Natural killer cell (primary cell): ENCODE measurements at regions of chr21 and their contacts with region 1.

Region 1: DNA sequence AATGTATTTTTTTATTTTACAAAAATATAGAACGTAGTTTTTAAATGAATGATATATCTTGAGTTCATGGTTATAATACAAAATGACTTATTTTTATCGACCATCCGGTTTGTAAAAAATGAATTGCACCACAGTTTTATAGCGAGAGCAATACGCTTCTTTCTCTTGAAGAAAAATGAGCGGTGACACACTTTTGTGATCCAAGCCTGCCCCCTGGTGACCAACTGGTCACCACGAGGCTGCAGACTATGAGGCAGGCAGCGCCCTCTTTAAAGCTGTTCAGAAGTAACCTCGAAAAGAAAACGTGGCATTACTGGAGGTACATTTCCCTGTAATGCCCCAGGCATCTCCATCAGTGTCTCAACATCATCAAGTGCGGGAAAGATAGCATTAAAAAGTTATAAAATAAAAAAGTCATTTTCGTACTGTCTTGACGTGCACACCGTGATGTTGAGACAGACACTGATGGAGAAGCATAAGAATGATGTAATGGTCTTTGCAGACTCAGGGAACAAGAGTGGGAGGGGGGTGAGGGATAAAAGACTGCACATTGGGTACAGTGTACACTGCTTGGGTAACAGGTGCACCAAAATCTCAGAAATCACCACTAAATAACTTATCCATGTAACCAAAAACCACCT is 734.2 kb upstream of the ADAMTS5 start:
- DNase-seq: peak; percentile 64 to 66
- ATAC-seq: peak; percentile 72 to 91 (median 85)
- H3K4me3 ChIP-seq: no peak overlapping the region
- H3K4me3 Mint-ChIP-seq: no peak overlapping the region
- H3K27ac ChIP-seq: no peak overlapping the region
- H3K27ac Mint-ChIP-seq: no peak overlapping the region
- H3K4me1 ChIP-seq: no peaks in the 10 kb centered on the region
- H3K4me1 Mint-ChIP-seq: no peaks in the 10 kb centered on the region
- H3K27me3 ChIP-seq: no peaks in the 10 kb centered on the region
- H3K27me3 Mint-ChIP-seq: peaks cover 0 to 16% of the 10 kb centered on the region in 2 donors
- CTCF ChIP-seq: peak; percentile 80

Region 2: DNA sequence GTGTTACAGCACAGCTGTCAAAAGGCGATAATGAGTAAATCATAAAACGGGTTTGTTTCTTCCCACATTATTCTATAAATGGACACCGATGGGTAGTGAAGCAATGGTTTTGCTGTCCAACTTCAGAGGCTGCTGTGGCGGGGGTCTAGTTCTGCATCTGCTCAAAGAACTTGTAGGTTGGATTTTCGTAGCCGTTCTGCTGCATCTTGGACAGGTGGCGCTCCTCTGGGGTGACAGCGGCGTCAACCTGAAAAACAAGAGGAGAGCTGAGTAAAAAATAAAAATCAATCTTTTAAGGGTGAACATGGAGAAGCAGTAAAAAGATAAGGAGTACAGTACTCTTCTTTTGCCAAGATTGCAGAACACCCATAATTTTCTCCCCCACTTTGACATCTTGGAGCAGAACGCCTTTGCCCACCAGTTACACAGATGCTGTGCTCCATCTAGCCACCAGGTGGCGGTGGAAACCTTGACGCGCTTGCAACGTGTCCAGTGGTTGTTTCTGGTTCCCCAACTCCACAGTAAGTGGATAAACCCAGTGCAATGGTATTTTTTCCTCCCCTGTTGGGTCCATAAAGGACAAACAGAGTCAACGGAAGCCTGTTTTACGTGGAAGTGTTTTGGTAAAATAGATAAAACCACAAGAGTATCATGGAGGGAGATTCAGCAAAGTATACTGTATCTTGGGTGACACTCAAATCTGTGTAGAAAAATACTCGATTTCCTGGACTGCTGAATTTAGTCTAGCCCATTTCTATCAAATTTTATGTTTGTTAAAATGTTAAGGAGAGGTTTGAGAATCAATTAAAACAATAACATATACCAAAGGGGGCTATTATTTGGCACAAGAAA is 1819.3 kb before region 1 on chr21:
- intact Hi-C with region 1: loop called (anchors 2 kb)
- DNase-seq: peak; percentile 30 to 73
- ATAC-seq: peak; percentile 64 to 81 (median 79)
- H3K4me3 ChIP-seq: no peak overlapping the region
- H3K4me3 Mint-ChIP-seq: no peak overlapping the region
- H3K27ac ChIP-seq: no peak overlapping the region
- H3K27ac Mint-ChIP-seq: no peak overlapping the region
- H3K4me1 ChIP-seq: no peaks in the 10 kb centered on the region
- H3K4me1 Mint-ChIP-seq: peaks cover 0 to 5% of the 10 kb centered on the region in 2 donors
- H3K27me3 ChIP-seq: no peaks in the 10 kb centered on the region
- H3K27me3 Mint-ChIP-seq: no peaks in the 10 kb centered on the region
- CTCF ChIP-seq: peak; percentile 90

Region 3: DNA sequence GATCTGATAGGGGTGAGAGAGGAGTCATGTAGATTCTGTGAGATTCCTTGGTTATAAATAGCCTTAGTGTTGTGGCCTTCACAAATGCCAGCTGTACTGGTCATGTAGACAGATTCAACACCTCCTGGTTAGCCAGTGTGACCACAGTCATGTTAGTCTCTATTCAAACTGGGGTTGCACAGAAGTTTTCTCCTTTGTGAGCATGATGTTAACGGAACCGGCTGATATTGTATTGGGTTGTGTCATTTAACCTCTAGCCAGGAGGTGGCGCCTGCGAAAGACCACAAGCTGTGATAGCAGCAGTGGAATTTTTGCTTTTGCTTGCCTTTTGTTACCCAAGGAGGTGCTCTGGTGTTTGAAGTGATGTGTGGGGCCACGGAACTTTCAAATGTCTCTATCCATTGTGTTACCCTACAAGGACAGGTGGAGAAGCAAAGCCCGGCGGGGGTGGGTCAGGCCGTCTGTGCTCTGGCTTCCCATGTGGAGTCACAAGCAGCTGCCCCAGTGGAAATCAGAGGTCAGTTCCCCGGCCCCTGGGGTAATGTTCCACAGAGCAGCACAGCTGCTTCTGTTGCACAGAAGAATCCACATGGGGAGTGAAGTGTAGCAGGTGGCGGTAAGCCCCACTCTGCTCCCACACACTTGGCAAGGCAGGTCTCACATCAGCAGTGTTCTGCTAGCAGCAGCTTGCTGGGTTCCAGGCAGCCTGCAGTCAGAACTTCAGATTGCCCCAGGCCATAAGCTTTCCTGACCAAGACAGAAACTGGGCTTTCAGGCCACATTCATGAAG is 968.5 kb before region 1 on chr21:
- intact Hi-C with region 1: loop called (anchors 10 kb)
- DNase-seq: peak in 1 of 2 donors; percentile 36
- ATAC-seq: peak in 2 of 3 donors; percentile 48 to 53
- H3K4me3 ChIP-seq: no peak overlapping the region
- H3K4me3 Mint-ChIP-seq: no peak overlapping the region
- H3K27ac ChIP-seq: no peak overlapping the region
- H3K27ac Mint-ChIP-seq: no peak overlapping the region
- H3K4me1 ChIP-seq: peaks cover 6% of the 10 kb centered on the region
- H3K4me1 Mint-ChIP-seq: peaks cover 0 to 10% of the 10 kb centered on the region in 2 donors
- H3K27me3 ChIP-seq: no peaks in the 10 kb centered on the region
- H3K27me3 Mint-ChIP-seq: peaks cover 0 to 6% of the 10 kb centered on the region in 2 donors
- CTCF ChIP-seq: peak; percentile 55

Region 4: DNA sequence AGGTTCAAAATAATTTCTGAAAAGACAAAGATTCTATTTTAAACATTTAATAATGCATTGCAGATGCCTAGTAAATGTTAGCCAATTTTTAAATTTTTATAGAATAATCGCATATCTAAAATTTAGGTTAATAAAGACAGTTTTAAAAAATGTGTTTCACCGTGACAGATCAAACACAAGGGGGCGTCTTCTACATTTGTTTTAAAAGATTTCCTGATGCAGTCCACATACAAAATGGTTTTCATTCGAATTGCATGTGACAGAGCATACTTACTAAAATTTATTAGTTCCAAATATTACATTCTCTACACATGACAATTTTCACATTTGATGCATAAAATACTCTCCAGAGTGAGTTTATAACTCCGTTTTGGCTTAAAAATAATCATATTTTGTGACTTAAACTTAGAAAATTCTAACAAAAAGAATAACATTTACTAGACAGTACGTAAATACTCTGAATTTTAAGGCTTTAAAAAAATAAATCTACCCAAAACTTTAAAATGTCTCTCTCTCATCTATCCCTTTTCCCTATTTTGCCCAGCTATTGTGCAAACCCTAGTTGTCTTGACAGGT is 931.4 kb before region 1 on chr21:
- intact Hi-C with region 1: loop called (anchors 2 kb)
- DNase-seq: peak in 1 of 2 donors; percentile 20
- ATAC-seq: no peak
- H3K4me3 ChIP-seq: no peak overlapping the region
- H3K4me3 Mint-ChIP-seq: no peak overlapping the region
- H3K27ac ChIP-seq: no peak overlapping the region
- H3K27ac Mint-ChIP-seq: no peak overlapping the region
- H3K4me1 ChIP-seq: no peaks in the 10 kb centered on the region
- H3K4me1 Mint-ChIP-seq: no peaks in the 10 kb centered on the region
- H3K27me3 ChIP-seq: no peaks in the 10 kb centered on the region
- H3K27me3 Mint-ChIP-seq: no peaks in the 10 kb centered on the region
- CTCF ChIP-seq: peak; percentile 67

Region 5: GRCh38 chr21:27572686-27573085 is 128.4 kb before region 1 on chr21:
- intact Hi-C with region 1: no loop called
- DNase-seq: no peak
- ATAC-seq: no peak
- H3K4me3 ChIP-seq: no peak overlapping the region
- H3K4me3 Mint-ChIP-seq: no peak overlapping the region
- H3K27ac ChIP-seq: no peak overlapping the region
- H3K27ac Mint-ChIP-seq: no peak overlapping the region
- H3K4me1 ChIP-seq: no peaks in the 10 kb centered on the region
- H3K4me1 Mint-ChIP-seq: no peaks in the 10 kb centered on the region
- H3K27me3 ChIP-seq: no peaks in the 10 kb centered on the region
- H3K27me3 Mint-ChIP-seq: no peaks in the 10 kb centered on the region
- CTCF ChIP-seq: no peak